AG04450 (cell line): ENCODE measurements at regions of chr3 and their contacts with region 1.

Region 1: GRCh38 chr3:139427283-139427993 is 38.0 kb upstream of the COPB2 start:
- DNase-seq: peak; percentile 34
- H3K4me3 ChIP-seq: no peak overlapping the region
- H3K27ac ChIP-seq: no peak overlapping the region
- H3K27me3 ChIP-seq: no peaks in the 10 kb centered on the region
- CTCF ChIP-seq: peak; percentile 85

Region 2: GRCh38 chr3:139389458-139390209 is 37.8 kb before region 1 on chr3 and contains the start of gene COPB2:
- CTCF ChIA-PET with region 1: interaction called, 11 read pairs
- POLR2A ChIA-PET with region 1: no interaction called
- DNase-seq: peak; percentile 98
- H3K4me3 ChIP-seq: peak within 1 kb of the TSS; percentile 94
- H3K27ac ChIP-seq: peak within 1 kb of the TSS; percentile 98
- H3K27me3 ChIP-seq: no peaks in the 10 kb centered on the region
- CTCF ChIP-seq: no peak
- polyA plus RNA-seq, gene COPB2: 263 and 331 TPM in 2 replicates

Region 3: GRCh38 chr3:139629033-139629432 is 201.6 kb after region 1 on chr3:
- CTCF ChIA-PET with region 1: interaction called, 17 read pairs
- POLR2A ChIA-PET with region 1: no interaction called
- DNase-seq: no peak
- H3K4me3 ChIP-seq: no peak overlapping the region
- H3K27ac ChIP-seq: no peak overlapping the region
- H3K27me3 ChIP-seq: peaks cover 2% of the 10 kb centered on the region
- CTCF ChIP-seq: peak; percentile 39